Lower lobe of right lung (tissue), 2 donors: ENCODE measurements at regions of chr1 and their contacts with region 1.

Region 1: DNA sequence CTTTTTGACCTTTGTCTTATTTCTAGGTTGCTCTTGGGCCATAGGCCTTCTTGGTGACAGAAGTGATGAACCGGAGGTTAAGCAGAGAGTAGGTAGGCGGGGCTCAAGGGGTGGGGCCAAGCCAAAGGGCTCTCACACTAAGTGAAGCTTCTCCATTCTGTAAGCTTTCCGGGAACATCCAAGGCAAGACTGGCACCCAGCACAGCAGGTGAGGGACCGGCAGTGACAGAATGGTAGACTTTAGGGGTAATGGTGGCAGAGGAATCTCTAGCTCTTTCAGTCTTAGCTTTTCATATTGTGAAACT is at the start of gene TNFAIP8L2:
- DNase-seq: peak; percentile 87
- ATAC-seq: peak; percentile 87 to 88
- H3K4me3 ChIP-seq: peak within 1 kb of the TSS; percentile 61
- H3K27ac ChIP-seq: peak within 1 kb of the TSS; percentile 69
- H3K4me1 ChIP-seq: peaks cover 22% of the 10 kb centered on the region
- H3K27me3 ChIP-seq: no peaks in the 10 kb centered on the region
- CTCF ChIP-seq: no peak
- total RNA-seq, gene TNFAIP8L2: 17.8 TPM

Region 2: DNA sequence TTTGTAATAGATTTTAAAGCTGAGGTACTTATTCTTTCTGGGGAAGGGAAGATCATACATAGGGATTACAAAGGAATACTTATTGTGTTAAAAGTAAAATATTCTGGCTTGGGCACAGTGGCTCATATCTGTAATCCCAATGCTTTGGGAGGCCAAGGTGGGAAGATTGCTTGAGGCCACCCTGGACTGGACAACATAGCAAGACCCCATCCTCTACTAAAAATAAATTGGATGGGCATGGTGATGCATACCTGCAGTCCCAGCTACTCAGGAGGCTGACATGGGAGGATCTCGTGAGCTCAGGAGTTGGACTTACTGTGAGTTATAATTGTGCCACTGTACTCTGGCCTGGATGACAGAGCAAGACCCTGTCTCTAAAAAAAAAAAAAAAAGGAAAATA is 58.3 kb before region 1 on chr1:
- intact Hi-C with region 1: loop called (anchors 5 kb)
- DNase-seq: no peak
- ATAC-seq: no peak
- H3K4me3 ChIP-seq: no peak overlapping the region
- H3K27ac ChIP-seq: no peak overlapping the region
- H3K4me1 ChIP-seq: no peaks in the 10 kb centered on the region
- H3K27me3 ChIP-seq: no peaks in the 10 kb centered on the region
- CTCF ChIP-seq: no peak